Vagina (tissue), 2 donors: ENCODE measurements at regions of chr6 and their contacts with region 1.

Region 1: DNA sequence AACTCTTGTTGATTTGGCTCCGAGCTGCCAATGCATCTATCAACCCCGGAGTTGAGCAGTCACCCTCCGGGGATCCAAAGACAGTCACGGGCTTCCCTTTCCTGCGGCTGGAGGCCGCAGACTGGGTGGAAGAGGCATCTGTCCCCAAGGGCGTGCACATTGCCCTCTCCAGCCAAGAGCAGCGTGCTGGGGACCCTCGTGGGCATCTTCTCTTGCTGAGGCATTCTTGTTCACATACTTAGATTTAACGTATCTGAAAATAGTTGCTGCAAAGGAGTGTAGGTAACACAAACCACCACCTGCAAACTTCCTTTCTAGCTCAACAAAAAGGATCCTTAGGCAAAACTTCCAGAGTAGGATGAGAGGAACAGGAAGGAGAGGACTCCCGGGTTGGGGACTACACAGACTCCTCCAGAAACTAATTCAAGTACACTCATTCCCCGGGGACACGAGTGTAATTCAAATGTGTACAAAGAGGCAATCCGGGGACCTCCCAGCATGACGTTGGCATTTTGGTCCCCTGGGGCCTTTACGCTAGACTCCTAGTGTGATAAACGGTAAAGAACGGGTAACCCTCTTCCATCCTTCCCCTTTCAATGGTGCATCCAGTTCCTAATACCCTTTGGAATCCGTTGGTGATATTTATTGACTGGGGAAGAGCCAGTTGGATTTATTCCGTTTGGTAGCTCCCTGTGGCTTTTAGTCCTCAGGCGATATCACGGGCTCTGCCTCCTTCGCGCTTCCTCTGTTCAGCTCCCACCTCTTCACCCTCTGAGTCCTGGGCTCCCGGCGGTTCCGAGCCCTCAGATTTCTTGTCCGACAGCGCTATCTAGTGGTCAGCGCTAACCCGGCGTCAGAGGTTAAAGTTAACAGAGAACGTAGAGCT is 2.7 kb upstream of the COL12A1 start:
- DNase-seq: no peak
- H3K4me3 ChIP-seq: peak overlapping the region; percentile 12 to 17
- H3K27ac ChIP-seq: peak overlapping the region; percentile 67
- H3K4me1 ChIP-seq: peaks cover 45% of the 10 kb centered on the region
- H3K27me3 ChIP-seq: no peaks in the 10 kb centered on the region
- CTCF ChIP-seq: peak; percentile 85 to 88 (median 87)
- POLR2A ChIP-seq: no peak

Region 2: GRCh38 chr6:73747289-73747688 is 1461.3 kb before region 1 on chr6:
- intact Hi-C with region 1: loop called (anchors 10 kb)
- DNase-seq: no peak
- H3K4me3 ChIP-seq: no peak overlapping the region
- H3K27ac ChIP-seq: no peak overlapping the region
- H3K4me1 ChIP-seq: peaks cover 7% of the 10 kb centered on the region
- H3K27me3 ChIP-seq: no peaks in the 10 kb centered on the region
- CTCF ChIP-seq: no peak
- POLR2A ChIP-seq: no peak

Region 3: GRCh38 chr6:74409447-74409846 is 799.1 kb before region 1 on chr6:
- intact Hi-C with region 1: loop called (anchors 10 kb)
- DNase-seq: no peak
- H3K4me3 ChIP-seq: no peak overlapping the region
- H3K27ac ChIP-seq: no peak overlapping the region
- H3K4me1 ChIP-seq: no peaks in the 10 kb centered on the region
- H3K27me3 ChIP-seq: no peaks in the 10 kb centered on the region
- CTCF ChIP-seq: peak in 1 of 3 experiments; percentile 29
- POLR2A ChIP-seq: no peak

Region 4: GRCh38 chr6:74606581-74607071 is 601.9 kb before region 1 on chr6:
- intact Hi-C with region 1: loop called (anchors 10 kb)
- DNase-seq: no peak
- H3K4me3 ChIP-seq: no peak overlapping the region
- H3K27ac ChIP-seq: no peak overlapping the region
- H3K4me1 ChIP-seq: no peaks in the 10 kb centered on the region
- H3K27me3 ChIP-seq: no peaks in the 10 kb centered on the region
- CTCF ChIP-seq: no peak
- POLR2A ChIP-seq: no peak

Region 5: DNA sequence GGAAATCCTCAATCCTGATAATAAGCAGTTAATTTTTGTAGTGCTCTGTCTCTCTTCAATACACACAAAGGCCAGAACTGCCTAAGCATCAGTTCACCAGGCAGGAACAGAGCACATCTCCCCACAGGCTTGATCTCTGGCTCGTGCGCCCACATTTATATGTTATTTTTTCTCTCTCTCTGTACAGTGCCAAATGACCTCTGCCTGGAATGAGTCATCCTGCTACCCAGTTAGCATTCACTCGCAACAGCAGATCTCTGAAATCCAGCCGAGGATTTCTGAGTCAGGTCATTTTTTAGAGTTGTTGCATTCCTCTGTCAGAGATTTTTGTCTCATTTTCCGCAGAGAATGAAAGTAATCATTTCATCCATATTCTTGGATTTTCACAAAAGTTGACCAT is 109.8 kb before region 1 on chr6:
- intact Hi-C with region 1: loop called (anchors 5 kb)
- DNase-seq: no peak
- H3K4me3 ChIP-seq: no peak overlapping the region
- H3K27ac ChIP-seq: peak overlapping the region; percentile 78
- H3K4me1 ChIP-seq: peaks cover 5% of the 10 kb centered on the region
- H3K27me3 ChIP-seq: no peaks in the 10 kb centered on the region
- CTCF ChIP-seq: no peak
- POLR2A ChIP-seq: no peak